ENCODE measurements at regions of chr6 and their contacts with region 1.

Region 1: DNA sequence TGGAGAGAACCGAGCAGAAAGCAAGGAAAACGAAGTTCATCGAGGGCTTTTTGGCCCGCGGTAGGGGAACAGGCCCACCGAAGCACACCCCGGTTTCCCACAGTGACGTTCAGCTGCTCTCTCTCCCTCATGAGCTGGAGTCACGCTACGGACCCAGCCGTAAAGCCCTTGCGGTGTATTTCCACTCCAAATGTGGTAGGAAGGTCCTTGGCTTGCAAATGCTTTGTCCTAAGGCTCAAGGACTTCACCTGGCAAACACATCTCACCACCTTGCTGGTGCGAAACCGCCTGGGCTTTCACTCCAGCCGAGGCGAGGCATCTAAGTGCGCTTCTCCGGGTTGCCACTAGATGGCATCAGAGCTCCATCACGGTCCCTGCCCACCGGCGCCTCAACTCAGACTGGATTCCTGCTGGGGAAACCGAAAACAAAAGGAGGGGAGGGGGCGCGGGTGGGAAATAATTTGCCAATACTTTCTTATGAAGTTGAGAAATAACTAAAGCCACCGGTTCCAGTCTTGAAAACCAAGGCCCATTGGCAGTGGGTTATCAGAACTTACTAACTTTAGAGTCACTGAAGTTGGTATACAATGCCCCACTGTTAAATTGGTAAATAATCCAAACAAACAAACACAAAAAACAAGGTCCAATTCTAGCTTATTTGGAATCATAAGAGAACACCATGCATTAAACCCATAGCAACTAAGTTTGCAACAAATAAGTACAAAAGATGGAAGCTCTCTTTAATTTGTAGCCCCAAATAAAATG is 13.4 kb upstream of the FOXC1 start:
- DNase-seq: peak; percentile 73

Region 2: GRCh38 chr6:2103644-2104523 is 507.6 kb after region 1 on chr6:
- CTCF ChIA-PET with region 1: interaction called, 13 read pairs
- POLR2A ChIA-PET with region 1: interaction called, 3 read pairs
- DNase-seq: peak; percentile 47